Aorta (tissue), 5 donors: ENCODE measurements at regions of chr7 and their contacts with region 1.

Region 1: DNA sequence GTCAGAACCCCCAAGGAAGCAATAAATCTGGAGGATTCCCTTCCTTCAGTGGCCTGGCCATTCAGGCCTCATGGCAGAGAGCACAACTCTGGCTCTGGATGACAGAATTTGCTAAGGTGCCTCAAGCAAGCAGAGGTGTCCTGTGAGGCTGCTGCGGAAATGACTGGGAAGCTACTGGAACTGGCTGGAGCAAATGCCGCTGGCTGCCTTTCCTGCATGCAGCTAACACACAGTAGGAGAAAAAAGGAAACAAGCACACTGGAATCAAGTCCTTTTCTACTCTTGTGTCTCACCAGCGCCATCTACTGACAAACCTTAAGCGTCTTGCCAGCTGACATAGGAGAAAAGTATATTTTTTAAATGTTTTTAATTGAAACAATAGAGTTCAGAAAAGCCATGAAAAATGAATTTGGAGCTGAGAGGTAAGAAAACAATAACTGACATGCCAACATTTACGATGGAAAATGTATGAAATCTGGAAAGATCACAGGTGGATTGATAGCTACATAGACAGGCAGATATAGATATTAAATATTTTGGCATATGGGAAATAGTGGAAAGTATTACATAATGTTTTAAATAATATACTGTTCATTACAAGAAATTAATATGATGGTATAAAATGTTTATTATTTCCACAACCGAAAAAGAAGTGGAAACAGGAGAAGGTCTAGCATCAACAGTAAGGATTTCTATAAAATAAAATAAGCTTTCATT is 951.6 kb downstream of the ANKRD7 start:
- DNase-seq: no peak
- ATAC-seq: no peak
- H3K4me3 ChIP-seq: no peak overlapping the region
- H3K27ac ChIP-seq: no peak overlapping the region
- H3K4me1 ChIP-seq: no peaks in the 10 kb centered on the region
- H3K27me3 ChIP-seq: no peaks in the 10 kb centered on the region

Region 2: DNA sequence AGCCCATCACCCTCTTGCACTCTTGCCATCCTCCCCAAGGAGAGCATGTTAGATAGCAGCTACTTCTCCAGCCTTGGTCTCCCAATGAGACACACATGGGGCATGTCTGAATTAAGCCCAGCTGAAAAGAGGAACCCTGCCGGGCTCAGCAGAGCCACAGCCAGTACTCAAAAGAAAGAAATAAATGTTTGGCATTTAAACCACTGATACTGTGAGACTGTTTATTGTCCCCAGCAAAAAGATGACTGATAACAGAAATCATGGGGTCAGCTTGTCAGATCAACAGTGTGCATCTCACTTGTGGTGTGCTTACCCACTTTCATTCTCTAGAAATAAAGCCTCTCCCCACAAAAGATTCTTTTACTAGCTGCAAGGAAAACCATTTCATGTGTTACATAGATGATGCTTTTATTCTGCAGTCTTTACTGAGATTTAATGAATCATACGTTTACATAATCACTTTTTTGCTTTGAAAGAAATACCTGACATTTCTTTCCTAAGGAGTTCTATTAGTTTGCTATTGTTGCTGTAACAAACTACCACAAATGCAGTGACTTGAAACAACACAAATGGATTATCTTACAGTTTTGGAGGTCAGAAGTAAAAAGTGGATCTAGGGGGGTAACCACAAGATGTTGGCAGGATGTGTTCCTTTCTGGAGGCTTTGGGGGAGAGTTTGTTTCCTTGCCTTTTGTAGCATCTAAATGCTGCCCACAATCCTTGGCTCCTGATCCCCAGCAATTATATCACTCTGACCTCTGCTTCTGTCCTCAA is 930.6 kb before region 1 on chr7:
- intact Hi-C with region 1: loop called in 1 of 2 experiments (anchors 10 kb)
- DNase-seq: no peak
- ATAC-seq: no peak
- H3K4me3 ChIP-seq: no peak overlapping the region
- H3K27ac ChIP-seq: no peak overlapping the region
- H3K4me1 ChIP-seq: peaks cover 0 to 2% of the 10 kb centered on the region in 2 donors
- H3K27me3 ChIP-seq: no peaks in the 10 kb centered on the region

Region 3: DNA sequence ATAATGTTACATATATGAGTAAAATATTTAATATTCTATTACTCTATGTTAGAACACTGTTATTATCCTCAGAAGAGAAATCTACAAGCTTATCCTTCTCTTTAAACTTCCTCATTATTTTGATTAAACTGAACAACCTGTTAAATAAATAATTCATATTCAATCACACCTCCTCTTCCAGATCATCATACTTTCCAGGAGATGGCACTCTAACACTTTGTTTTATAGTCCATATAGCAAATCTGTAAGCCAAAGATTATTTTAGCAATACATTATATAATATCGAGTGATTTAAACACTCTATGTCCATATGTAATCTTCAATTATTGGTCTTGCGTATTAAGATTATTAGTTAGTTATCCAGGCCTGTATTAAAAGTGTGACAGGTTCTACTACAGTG is 257.5 kb before region 1 on chr7:
- intact Hi-C with region 1: loop called (anchors 2 to 5 kb)
- DNase-seq: no peak
- ATAC-seq: no peak
- H3K4me3 ChIP-seq: no peak overlapping the region
- H3K27ac ChIP-seq: no peak overlapping the region
- H3K4me1 ChIP-seq: no peaks in the 10 kb centered on the region
- H3K27me3 ChIP-seq: no peaks in the 10 kb centered on the region